ENCODE measurements at regions of chrX and their contacts with region 1.

Region 1: GRCh38 chrX:68146054-68146453 is 287.2 kb downstream of the OPHN1 start:
- DNase-seq: peak; percentile 41
- H3K4me3 ChIP-seq: no peak overlapping the region
- H3K27ac ChIP-seq: no peak overlapping the region
- H3K4me1 ChIP-seq: no peaks in the 10 kb centered on the region
- H3K27me3 ChIP-seq: no peaks in the 10 kb centered on the region
- CTCF ChIP-seq: peak; percentile 26
- POLR2A ChIP-seq: no peak

Region 2: DNA sequence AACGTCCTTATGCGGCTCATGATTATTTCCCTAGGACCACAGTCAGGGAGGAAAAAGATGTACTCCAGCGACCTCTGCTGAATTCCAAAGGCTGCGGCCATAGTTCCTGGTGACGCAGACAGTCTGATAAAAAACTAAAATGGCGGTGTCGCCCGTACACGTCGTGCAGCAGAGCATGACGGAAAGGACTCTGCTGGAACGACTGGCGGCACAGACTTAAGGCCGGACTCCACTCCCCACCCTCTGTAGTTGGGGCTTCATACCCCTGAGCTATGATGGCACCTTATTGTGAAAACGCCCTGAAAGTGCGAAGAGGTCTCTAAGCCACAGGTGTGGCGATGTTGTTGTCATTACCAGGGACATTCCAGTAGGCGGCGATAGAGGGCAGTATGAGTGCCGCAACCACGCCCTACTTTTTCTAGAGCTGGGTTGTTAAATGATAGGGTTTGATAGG is 1417.2 kb before region 1 on chrX:
- CTCF ChIA-PET with region 1: interaction called, 12 read pairs
- POLR2A ChIA-PET with region 1: no interaction called
- dilution Hi-C with region 1: no loop called
- intact Hi-C with region 1: no loop called
- DNase-seq: peak; percentile 39
- H3K4me3 ChIP-seq: peak overlapping the region; percentile 28 to 74 (median 40)
- H3K27ac ChIP-seq: peak overlapping the region; percentile 22
- H3K4me1 ChIP-seq: no peaks in the 10 kb centered on the region
- H3K27me3 ChIP-seq: no peaks in the 10 kb centered on the region
- CTCF ChIP-seq: peak; percentile 45 to 55
- POLR2A ChIP-seq: no peak

Region 3: GRCh38 chrX:67555578-67556203 is 590.4 kb before region 1 on chrX:
- CTCF ChIA-PET with region 1: interaction called, 4 read pairs
- POLR2A ChIA-PET with region 1: no interaction called
- dilution Hi-C with region 1: no loop called
- intact Hi-C with region 1: loop called (anchors 5 kb)
- DNase-seq: peak; percentile 31
- H3K4me3 ChIP-seq: no peak overlapping the region
- H3K27ac ChIP-seq: no peak overlapping the region
- H3K4me1 ChIP-seq: peaks cover 22% of the 10 kb centered on the region
- H3K27me3 ChIP-seq: no peaks in the 10 kb centered on the region
- CTCF ChIP-seq: peak; percentile 64 to 68
- POLR2A ChIP-seq: no peak

Region 4: GRCh38 chrX:68018681-68019111 is 127.4 kb before region 1 on chrX:
- CTCF ChIA-PET with region 1: interaction called, 66 read pairs
- POLR2A ChIA-PET with region 1: no interaction called
- dilution Hi-C with region 1: no loop called
- intact Hi-C with region 1: loop called (anchors 1 kb)
- DNase-seq: peak; percentile 29
- H3K4me3 ChIP-seq: no peak overlapping the region
- H3K27ac ChIP-seq: no peak overlapping the region
- H3K4me1 ChIP-seq: no peaks in the 10 kb centered on the region
- H3K27me3 ChIP-seq: no peaks in the 10 kb centered on the region
- CTCF ChIP-seq: peak; percentile 49 to 50
- POLR2A ChIP-seq: no peak

Region 5: GRCh38 chrX:68307769-68308168 is 161.7 kb after region 1 on chrX:
- CTCF ChIA-PET with region 1: no interaction called
- POLR2A ChIA-PET with region 1: no interaction called
- dilution Hi-C with region 1: no loop called
- intact Hi-C with region 1: no loop called
- DNase-seq: no peak
- H3K4me3 ChIP-seq: no peak overlapping the region
- H3K27ac ChIP-seq: no peak overlapping the region
- H3K4me1 ChIP-seq: no peaks in the 10 kb centered on the region
- H3K27me3 ChIP-seq: no peaks in the 10 kb centered on the region
- CTCF ChIP-seq: no peak
- POLR2A ChIP-seq: no peak

Measured in endothelial cell of umbilical vein (primary cell).